ENCODE measurements at regions of chr17 and their contacts with region 1.

Region 1: DNA sequence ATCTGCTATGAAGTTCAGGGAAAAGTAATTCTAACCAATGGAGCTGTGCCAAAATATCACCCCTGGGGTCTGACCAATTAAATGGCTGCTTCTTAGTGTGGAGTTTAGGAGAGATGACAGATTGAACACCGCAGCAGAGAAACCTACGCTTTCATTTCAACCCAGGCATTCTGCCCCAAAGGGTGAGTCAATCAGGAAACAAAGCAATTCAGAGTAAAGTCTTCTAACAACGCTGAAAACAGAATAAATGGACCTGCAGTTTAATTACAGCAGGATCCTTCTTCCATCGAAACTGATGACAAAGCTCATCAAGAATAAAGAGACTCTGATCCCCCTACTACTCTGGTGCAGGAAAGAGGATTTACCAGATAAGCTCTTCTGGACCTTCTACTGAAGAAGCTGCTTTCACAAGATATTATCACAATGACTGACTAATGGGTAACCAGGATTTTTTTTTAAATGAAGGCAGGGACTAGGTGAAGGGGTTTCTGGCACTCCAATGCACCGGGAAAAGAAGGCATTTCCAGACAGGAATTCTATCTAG is 16.7 kb downstream of the RFFL start:
- DNase-seq: peak; percentile 81
- ATAC-seq: peak; percentile 87
- H3K4me3 ChIP-seq: peak overlapping the region; percentile 57
- H3K27ac ChIP-seq: peak overlapping the region; percentile 75
- H3K4me1 ChIP-seq: peaks cover 42% of the 10 kb centered on the region
- H3K27me3 ChIP-seq: no peaks in the 10 kb centered on the region
- CTCF ChIP-seq: no peak
- EP300 ChIP-seq: peak in 1 of 2 experiments; percentile 42; a peak in 1 of 4 replicates
- POLR2A ChIP-seq: peak; percentile 50
- RAD21 ChIP-seq: no peak

Region 2: DNA sequence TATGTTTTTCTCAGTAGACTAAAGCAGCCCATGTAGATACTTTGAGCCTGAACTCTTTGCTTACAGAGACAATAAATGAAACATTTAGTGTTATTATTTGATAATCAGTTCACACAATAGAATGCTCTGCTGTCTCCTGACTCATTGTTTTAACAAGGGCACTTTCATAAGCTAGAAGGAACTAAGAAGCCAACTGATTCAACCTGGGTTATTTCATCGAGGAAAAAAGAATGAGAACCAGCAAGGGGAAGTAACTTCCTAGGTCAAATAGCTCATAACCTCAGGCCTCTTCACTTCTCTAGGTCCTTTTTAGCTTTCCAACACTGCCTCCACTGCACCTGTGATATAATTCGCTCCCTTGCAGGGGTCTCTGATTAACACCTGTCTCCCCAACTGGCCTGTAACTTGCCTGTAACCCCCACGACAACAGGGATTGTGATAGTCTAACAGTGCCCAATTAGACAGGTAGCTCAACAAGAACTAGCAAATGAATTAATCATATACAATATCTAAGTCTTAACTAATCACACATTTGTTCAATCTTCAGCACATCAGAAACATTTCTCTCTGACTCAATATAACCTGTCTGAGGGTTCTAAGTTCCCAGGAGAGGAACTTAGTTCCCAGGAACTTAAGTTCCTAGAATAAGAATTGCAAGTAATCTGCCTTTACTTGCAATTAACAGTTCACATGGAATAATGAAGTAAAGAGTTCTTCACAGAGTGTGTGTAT is 18.1 kb before region 1 on chr17:
- CTCF ChIA-PET with region 1: interaction called, 5 read pairs
- POLR2A ChIA-PET with region 1: interaction called, 7 read pairs
- RAD21 ChIA-PET with region 1: interaction called, 12 read pairs
- SMC1A ChIA-PET with region 1: interaction called, 4 read pairs
- in situ Hi-C with region 1: no loop called
- intact Hi-C with region 1: no loop called
- DNase-seq: no peak
- ATAC-seq: peak; percentile 73
- H3K4me3 ChIP-seq: no peak overlapping the region
- H3K27ac ChIP-seq: peak overlapping the region; percentile 61; the same call in 1 of the 2 replicates
- H3K4me1 ChIP-seq: peaks cover 15% of the 10 kb centered on the region
- H3K27me3 ChIP-seq: no peaks in the 10 kb centered on the region
- CTCF ChIP-seq: no peak
- EP300 ChIP-seq: no peak
- POLR2A ChIP-seq: no peak
- RAD21 ChIP-seq: no peak

Region 3: GRCh38 chr17:35069311-35069710 is 22.5 kb after region 1 on chr17:
- CTCF ChIA-PET with region 1: interaction called, 23 read pairs
- POLR2A ChIA-PET with region 1: interaction called, 37 read pairs
- RAD21 ChIA-PET with region 1: interaction called, 73 read pairs
- SMC1A ChIA-PET with region 1: interaction called, 221 read pairs
- in situ Hi-C with region 1: no loop called
- intact Hi-C with region 1: no loop called
- DNase-seq: no peak
- ATAC-seq: peak; percentile 68
- H3K4me3 ChIP-seq: no peak overlapping the region
- H3K27ac ChIP-seq: peak overlapping the region; percentile 33
- H3K4me1 ChIP-seq: peaks cover 33% of the 10 kb centered on the region
- H3K27me3 ChIP-seq: no peaks in the 10 kb centered on the region
- CTCF ChIP-seq: no peak
- EP300 ChIP-seq: no peak
- POLR2A ChIP-seq: no peak
- RAD21 ChIP-seq: no peak

Region 4: DNA sequence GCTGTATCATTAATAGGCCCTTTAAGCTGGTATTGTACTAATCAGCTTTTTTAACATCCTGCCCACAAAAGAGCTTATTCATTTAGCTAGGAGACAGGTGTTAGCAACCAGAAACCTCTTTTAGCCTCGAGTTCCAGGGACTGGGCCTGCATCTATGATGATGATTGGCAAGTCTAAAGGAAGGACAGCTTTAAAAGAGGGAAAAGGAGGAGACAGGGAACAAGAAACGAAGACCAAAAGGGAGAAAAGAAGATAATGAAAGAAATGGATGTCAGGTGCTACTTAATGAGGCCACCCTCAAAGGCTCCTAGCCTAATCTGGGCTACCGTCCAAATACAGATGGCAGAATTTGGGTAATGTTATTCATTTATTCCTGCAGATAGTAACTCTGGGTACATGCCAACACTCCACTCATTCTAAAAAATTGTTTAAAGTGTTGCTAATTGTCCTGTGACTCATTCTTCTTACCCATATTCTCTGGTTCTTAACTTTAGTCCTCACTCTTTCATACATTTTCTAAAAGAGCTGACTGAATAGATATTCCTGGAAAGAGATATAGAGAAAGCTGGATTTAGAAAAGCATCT is 35.4 kb after region 1 on chr17:
- CTCF ChIA-PET with region 1: interaction called, 10 read pairs
- POLR2A ChIA-PET with region 1: interaction called, 13 read pairs
- RAD21 ChIA-PET with region 1: interaction called, 29 read pairs
- SMC1A ChIA-PET with region 1: interaction called, 94 read pairs
- in situ Hi-C with region 1: no loop called
- intact Hi-C with region 1: no loop called
- DNase-seq: no peak
- ATAC-seq: peak; percentile 59
- H3K4me3 ChIP-seq: peak overlapping the region; percentile 28; the same call in 1 of the 2 replicates
- H3K27ac ChIP-seq: peak overlapping the region; percentile 83
- H3K4me1 ChIP-seq: peaks cover 37% of the 10 kb centered on the region
- H3K27me3 ChIP-seq: no peaks in the 10 kb centered on the region
- CTCF ChIP-seq: no peak
- EP300 ChIP-seq: no peak
- POLR2A ChIP-seq: no peak
- RAD21 ChIP-seq: no peak

Region 5: GRCh38 chr17:35088881-35089585 is 42.2 kb after region 1 on chr17:
- CTCF ChIA-PET with region 1: interaction called, 8 read pairs
- POLR2A ChIA-PET with region 1: interaction called, 13 read pairs
- RAD21 ChIA-PET with region 1: interaction called, 12 read pairs
- SMC1A ChIA-PET with region 1: interaction called, 94 read pairs
- in situ Hi-C with region 1: no loop called
- intact Hi-C with region 1: loop called (anchors 1 kb)
- DNase-seq: no peak
- ATAC-seq: peak; percentile 83
- H3K4me3 ChIP-seq: peak overlapping the region; percentile 80
- H3K27ac ChIP-seq: peak overlapping the region; percentile 96
- H3K4me1 ChIP-seq: peaks cover 9% of the 10 kb centered on the region
- H3K27me3 ChIP-seq: no peaks in the 10 kb centered on the region
- CTCF ChIP-seq: peak; percentile 70 to 84 (median 76); a peak in 5 of 6 replicates
- EP300 ChIP-seq: peak in 1 of 2 experiments; percentile 62; a peak in 1 of 4 replicates
- POLR2A ChIP-seq: peak; percentile 87
- RAD21 ChIP-seq: peak; percentile 73

Region 6: DNA sequence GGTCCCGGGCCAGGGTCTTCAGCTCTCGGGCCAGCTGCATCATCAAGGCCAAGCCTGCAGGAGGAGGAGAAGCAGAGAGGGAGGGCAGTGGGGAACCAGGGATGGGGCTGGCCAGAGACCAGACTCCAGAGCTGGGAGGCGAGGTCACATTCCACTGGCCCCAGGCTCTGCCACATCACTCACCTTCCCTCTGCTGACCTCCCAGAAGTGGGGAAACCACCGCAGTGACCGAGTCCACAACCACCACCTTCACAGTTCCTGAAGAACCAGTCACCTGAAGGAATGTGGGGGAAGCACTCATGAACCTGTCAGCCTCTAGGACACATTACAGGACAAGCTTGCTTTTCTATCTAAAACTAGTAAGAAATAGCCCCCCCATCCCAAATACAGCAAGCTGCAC is 56.5 kb after region 1 on chr17:
- CTCF ChIA-PET with region 1: no interaction called
- POLR2A ChIA-PET with region 1: no interaction called
- RAD21 ChIA-PET with region 1: no interaction called
- SMC1A ChIA-PET with region 1: no interaction called
- in situ Hi-C with region 1: no loop called
- intact Hi-C with region 1: no loop called
- DNase-seq: no peak
- ATAC-seq: no peak
- H3K4me3 ChIP-seq: no peak overlapping the region
- H3K27ac ChIP-seq: no peak overlapping the region
- H3K4me1 ChIP-seq: no peaks in the 10 kb centered on the region
- H3K27me3 ChIP-seq: no peaks in the 10 kb centered on the region
- CTCF ChIP-seq: no peak
- EP300 ChIP-seq: no peak
- POLR2A ChIP-seq: no peak
- RAD21 ChIP-seq: no peak

Region 7: GRCh38 chr17:35345926-35346771 is 299.3 kb after region 1 on chr17:
- CTCF ChIA-PET with region 1: no interaction called
- POLR2A ChIA-PET with region 1: no interaction called
- RAD21 ChIA-PET with region 1: no interaction called
- SMC1A ChIA-PET with region 1: no interaction called
- in situ Hi-C with region 1: no loop called
- intact Hi-C with region 1: no loop called
- DNase-seq: no peak
- ATAC-seq: peak; percentile 54
- H3K4me3 ChIP-seq: no peak overlapping the region
- H3K27ac ChIP-seq: no peak overlapping the region
- H3K4me1 ChIP-seq: peaks cover 12% of the 10 kb centered on the region
- H3K27me3 ChIP-seq: peaks cover 4 to 24% of the 10 kb centered on the region in 2 experiments
- CTCF ChIP-seq: no peak
- EP300 ChIP-seq: no peak
- POLR2A ChIP-seq: no peak
- RAD21 ChIP-seq: no peak